AG04449 (cell line): ENCODE measurements at regions of chr4 and their contacts with region 1.

Region 1: GRCh38 chr4:4488405-4489404 is 53.1 kb downstream of the STX18 start:
- DNase-seq: peak; percentile 31
- H3K4me3 ChIP-seq: no peak overlapping the region
- CTCF ChIP-seq: peak; percentile 86

Region 2: DNA sequence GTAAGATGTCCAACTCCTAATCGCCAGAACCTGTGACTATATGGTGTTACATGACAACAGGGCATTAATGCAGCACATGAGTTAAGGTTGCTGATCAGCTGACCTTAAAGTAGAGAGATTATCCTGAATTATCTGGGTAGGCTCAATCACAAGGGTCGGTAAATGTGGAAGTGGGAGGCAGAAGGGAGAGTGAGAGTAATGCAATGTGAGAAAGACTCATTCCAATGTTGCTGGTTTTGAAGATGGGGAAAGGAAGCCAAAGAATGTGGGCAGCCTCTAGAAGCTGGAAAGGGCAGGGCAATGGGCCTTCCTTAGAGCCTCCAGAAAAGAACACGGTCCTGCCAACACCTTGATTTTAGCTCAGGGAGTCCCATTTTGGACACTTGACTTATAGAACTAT is 14.2 kb before region 1 on chr4:
- CTCF ChIA-PET with region 1: interaction called, 29 read pairs
- POLR2A ChIA-PET with region 1: no interaction called
- DNase-seq: no peak
- H3K4me3 ChIP-seq: no peak overlapping the region
- CTCF ChIP-seq: no peak

Region 3: GRCh38 chr4:4502694-4503311 is 14.1 kb after region 1 on chr4:
- CTCF ChIA-PET with region 1: interaction called, 21 read pairs
- POLR2A ChIA-PET with region 1: no interaction called
- DNase-seq: no peak
- H3K4me3 ChIP-seq: no peak overlapping the region
- CTCF ChIP-seq: no peak

Region 4: DNA sequence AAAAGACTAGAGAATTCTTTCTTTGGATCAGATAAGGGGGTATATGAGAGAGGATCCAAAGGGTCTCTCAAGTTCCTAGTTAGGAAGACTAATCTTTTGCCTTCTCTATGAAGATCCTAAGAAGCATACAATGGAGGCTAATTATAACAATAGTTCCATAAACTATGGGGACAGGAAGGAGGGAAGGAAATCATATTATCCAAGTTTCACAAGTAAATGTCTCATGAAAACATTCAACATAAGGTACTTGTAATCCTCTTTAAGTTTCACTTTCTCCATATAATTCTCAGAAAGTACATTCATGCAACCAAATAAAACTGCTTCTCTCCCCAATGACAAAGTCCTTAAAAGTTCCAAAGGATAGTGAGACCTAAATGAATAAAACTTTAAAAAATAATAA is 26.1 kb after region 1 on chr4:
- CTCF ChIA-PET with region 1: interaction called, 10 read pairs
- POLR2A ChIA-PET with region 1: no interaction called
- DNase-seq: no peak
- H3K4me3 ChIP-seq: no peak overlapping the region
- CTCF ChIP-seq: no peak

Region 5: GRCh38 chr4:4564522-4564921 is 75.8 kb after region 1 on chr4:
- CTCF ChIA-PET with region 1: no interaction called
- POLR2A ChIA-PET with region 1: no interaction called
- DNase-seq: no peak
- H3K4me3 ChIP-seq: no peak overlapping the region
- CTCF ChIP-seq: no peak

Region 6: GRCh38 chr4:4575273-4576211 is 86.8 kb after region 1 on chr4:
- CTCF ChIA-PET with region 1: interaction called, 12 read pairs
- POLR2A ChIA-PET with region 1: no interaction called
- DNase-seq: no peak
- H3K4me3 ChIP-seq: peak overlapping the region; percentile 60
- CTCF ChIP-seq: peak; percentile 43

Region 7: DNA sequence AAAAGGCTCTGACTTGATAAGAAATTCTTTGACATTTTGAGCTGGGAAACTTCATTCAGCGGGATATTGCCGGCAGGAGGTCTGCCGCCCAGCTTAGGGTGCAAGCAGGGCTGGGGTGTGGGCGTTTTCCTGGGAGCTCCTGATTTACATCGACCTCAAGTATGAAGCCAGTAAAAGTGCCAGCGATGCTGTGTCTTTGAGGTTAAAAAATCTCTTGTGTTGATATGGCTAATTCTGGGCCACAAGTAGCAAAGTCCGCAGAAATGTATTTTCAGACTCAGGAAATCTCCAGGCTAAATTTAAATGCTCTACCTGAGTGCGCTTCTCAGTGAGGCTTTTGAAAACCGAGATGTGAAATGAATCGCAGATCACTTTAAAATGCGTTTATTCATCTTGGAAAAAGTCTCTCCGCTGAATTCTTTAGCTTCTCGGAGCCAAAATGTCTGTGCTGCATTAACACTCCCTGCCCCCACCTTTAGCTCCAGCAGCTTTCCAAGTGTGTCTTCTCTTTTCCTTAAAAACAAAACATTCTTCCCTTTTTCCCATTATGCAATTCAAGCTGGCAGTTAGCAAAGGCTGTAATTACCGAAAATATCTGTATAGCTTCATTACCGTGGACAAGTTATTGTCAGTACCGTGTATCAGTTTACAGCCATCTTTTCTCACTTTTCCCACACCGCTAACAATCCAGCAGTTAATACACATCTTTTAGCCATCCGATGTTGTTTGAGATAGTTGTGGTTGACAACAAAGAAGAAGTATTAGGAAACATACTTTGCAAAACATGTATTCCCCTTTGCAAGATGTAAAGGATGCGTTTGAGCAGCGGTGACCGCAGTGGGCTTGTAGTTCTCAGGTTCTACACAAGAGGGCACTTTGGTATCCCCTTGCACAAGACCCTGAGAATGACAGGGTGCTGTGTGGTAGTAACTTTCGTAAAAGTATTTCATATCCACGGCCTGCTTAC is 189.1 kb after region 1 on chr4:
- CTCF ChIA-PET with region 1: interaction called, 12 read pairs
- POLR2A ChIA-PET with region 1: no interaction called
- DNase-seq: no peak
- H3K4me3 ChIP-seq: peak overlapping the region; percentile 32
- CTCF ChIP-seq: peak; percentile 70